ENCODE measurements at regions of chr5 and their contacts with region 1.

Region 1: GRCh38 chr5:180784497-180785097 is 18.0 kb downstream of the MGAT1 start:
- DNase-seq: peak; percentile 55 to 84 (median 77)
- ATAC-seq: peak; percentile 84
- H3K4me3 ChIP-seq: no peak overlapping the region
- H3K4me3 Mint-ChIP-seq: no peak overlapping the region
- H3K27ac ChIP-seq: no peak overlapping the region
- H3K27ac Mint-ChIP-seq: peak overlapping the region; percentile 1
- H3K4me1 ChIP-seq: no peaks in the 10 kb centered on the region
- H3K4me1 Mint-ChIP-seq: peaks cover 43% of the 10 kb centered on the region
- H3K27me3 ChIP-seq: no peaks in the 10 kb centered on the region
- H3K27me3 Mint-ChIP-seq: no peaks in the 10 kb centered on the region
- CTCF ChIP-seq: peak; percentile 74

Region 2: GRCh38 chr5:180607851-180608583 is 176.6 kb before region 1 on chr5:
- CTCF ChIA-PET with region 1: no interaction called
- POLR2A ChIA-PET with region 1: no interaction called
- intact Hi-C with region 1: no loop called
- DNase-seq: no peak
- ATAC-seq: no peak
- H3K4me3 ChIP-seq: no peak overlapping the region
- H3K4me3 Mint-ChIP-seq: no peak overlapping the region
- H3K27ac ChIP-seq: no peak overlapping the region
- H3K27ac Mint-ChIP-seq: no peak overlapping the region
- H3K4me1 ChIP-seq: no peaks in the 10 kb centered on the region
- H3K4me1 Mint-ChIP-seq: peaks cover 3% of the 10 kb centered on the region
- H3K27me3 ChIP-seq: no peaks in the 10 kb centered on the region
- H3K27me3 Mint-ChIP-seq: peaks cover 2% of the 10 kb centered on the region
- CTCF ChIP-seq: no peak

Region 3: GRCh38 chr5:180658774-180659564 is 125.6 kb before region 1 on chr5:
- CTCF ChIA-PET with region 1: no interaction called
- POLR2A ChIA-PET with region 1: no interaction called
- intact Hi-C with region 1: no loop called
- DNase-seq: no peak
- ATAC-seq: no peak
- H3K4me3 ChIP-seq: no peak overlapping the region
- H3K4me3 Mint-ChIP-seq: peak overlapping the region; percentile 11
- H3K27ac ChIP-seq: no peak overlapping the region
- H3K27ac Mint-ChIP-seq: no peak overlapping the region
- H3K4me1 ChIP-seq: no peaks in the 10 kb centered on the region
- H3K4me1 Mint-ChIP-seq: peaks cover 4% of the 10 kb centered on the region
- H3K27me3 ChIP-seq: peaks cover 2 to 3% of the 10 kb centered on the region in 2 experiments
- H3K27me3 Mint-ChIP-seq: peaks cover 29% of the 10 kb centered on the region
- CTCF ChIP-seq: no peak

Region 4: GRCh38 chr5:180802325-180803180 is 18.0 kb after region 1 on chr5 and contains the start of gene MGAT1:
- CTCF ChIA-PET with region 1: interaction called, 12 read pairs
- POLR2A ChIA-PET with region 1: interaction called, 5 read pairs
- intact Hi-C with region 1: loop called in 1 of 2 experiments (anchors 2 kb)
- DNase-seq: peak; percentile 39 to 87 (median 80)
- ATAC-seq: peak; percentile 60
- H3K4me3 ChIP-seq: peak within 1 kb of the TSS; percentile 90 to 92
- H3K4me3 Mint-ChIP-seq: peak within 1 kb of the TSS; percentile 87
- H3K27ac ChIP-seq: peak within 1 kb of the TSS; percentile 63 to 87
- H3K27ac Mint-ChIP-seq: peak within 1 kb of the TSS; percentile 100
- H3K4me1 ChIP-seq: peaks cover 80% of the 10 kb centered on the region
- H3K4me1 Mint-ChIP-seq: peaks cover 84% of the 10 kb centered on the region
- H3K27me3 ChIP-seq: no peaks in the 10 kb centered on the region
- H3K27me3 Mint-ChIP-seq: no peaks in the 10 kb centered on the region
- CTCF ChIP-seq: no peak
- total RNA-seq, gene MGAT1: 43.5 to 47.5 TPM

Region 5: GRCh38 chr5:180831139-180832048 is 46.8 kb after region 1 on chr5:
- CTCF ChIA-PET with region 1: interaction called, 3 read pairs
- POLR2A ChIA-PET with region 1: interaction called, 15 read pairs
- intact Hi-C with region 1: loop called in 1 of 2 experiments (anchors 10 kb)
- DNase-seq: peak; percentile 51 to 88 (median 79)
- ATAC-seq: peak; percentile 43
- H3K4me3 ChIP-seq: peak overlapping the region; percentile 67 to 93
- H3K4me3 Mint-ChIP-seq: peak overlapping the region; percentile 97
- H3K27ac ChIP-seq: peak overlapping the region; percentile 85 to 96
- H3K27ac Mint-ChIP-seq: peak overlapping the region; percentile 98
- H3K4me1 ChIP-seq: peaks cover 48% of the 10 kb centered on the region
- H3K4me1 Mint-ChIP-seq: peaks cover 51% of the 10 kb centered on the region
- H3K27me3 ChIP-seq: no peaks in the 10 kb centered on the region
- H3K27me3 Mint-ChIP-seq: no peaks in the 10 kb centered on the region
- CTCF ChIP-seq: no peak

Region 6: DNA sequence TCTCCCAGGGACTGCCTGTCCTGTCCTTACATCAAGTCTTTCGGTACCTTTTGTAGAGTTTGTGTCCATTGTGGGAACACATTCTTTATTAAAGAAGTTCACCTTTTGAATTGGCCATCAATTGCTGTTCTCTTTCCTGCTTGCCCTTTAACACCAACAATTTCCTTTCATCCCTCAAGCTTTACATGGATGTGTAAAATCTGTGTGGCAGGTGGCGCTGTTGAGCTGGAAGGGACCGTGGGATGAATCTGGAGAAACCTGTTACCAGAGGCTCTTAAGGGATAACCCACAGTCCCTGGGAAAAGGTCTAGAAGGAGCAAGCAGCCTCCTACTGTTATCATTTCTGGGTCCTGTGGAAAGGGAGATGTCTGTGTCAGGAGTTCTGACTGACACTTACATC is 84.4 kb after region 1 on chr5:
- CTCF ChIA-PET with region 1: interaction called, 5 read pairs
- POLR2A ChIA-PET with region 1: no interaction called
- intact Hi-C with region 1: loop called in 1 of 2 experiments (anchors 2 kb)
- DNase-seq: peak in 8 of 9 experiments; percentile 41 to 73 (median 64)
- ATAC-seq: no peak
- H3K4me3 ChIP-seq: no peak overlapping the region
- H3K4me3 Mint-ChIP-seq: no peak overlapping the region
- H3K27ac ChIP-seq: no peak overlapping the region
- H3K27ac Mint-ChIP-seq: no peak overlapping the region
- H3K4me1 ChIP-seq: no peaks in the 10 kb centered on the region
- H3K4me1 Mint-ChIP-seq: no peaks in the 10 kb centered on the region
- H3K27me3 ChIP-seq: no peaks in the 10 kb centered on the region
- H3K27me3 Mint-ChIP-seq: peaks cover 4% of the 10 kb centered on the region
- CTCF ChIP-seq: peak; percentile 53

Region 7: GRCh38 chr5:180920710-180921109 is 136.1 kb after region 1 on chr5:
- CTCF ChIA-PET with region 1: no interaction called
- POLR2A ChIA-PET with region 1: no interaction called
- intact Hi-C with region 1: no loop called
- DNase-seq: no peak
- ATAC-seq: no peak
- H3K4me3 ChIP-seq: no peak overlapping the region
- H3K4me3 Mint-ChIP-seq: no peak overlapping the region
- H3K27ac ChIP-seq: no peak overlapping the region
- H3K27ac Mint-ChIP-seq: no peak overlapping the region
- H3K4me1 ChIP-seq: no peaks in the 10 kb centered on the region
- H3K4me1 Mint-ChIP-seq: no peaks in the 10 kb centered on the region
- H3K27me3 ChIP-seq: peaks cover 0 to 2% of the 10 kb centered on the region in 2 experiments
- H3K27me3 Mint-ChIP-seq: peaks cover 21% of the 10 kb centered on the region
- CTCF ChIP-seq: no peak

Region 8: DNA sequence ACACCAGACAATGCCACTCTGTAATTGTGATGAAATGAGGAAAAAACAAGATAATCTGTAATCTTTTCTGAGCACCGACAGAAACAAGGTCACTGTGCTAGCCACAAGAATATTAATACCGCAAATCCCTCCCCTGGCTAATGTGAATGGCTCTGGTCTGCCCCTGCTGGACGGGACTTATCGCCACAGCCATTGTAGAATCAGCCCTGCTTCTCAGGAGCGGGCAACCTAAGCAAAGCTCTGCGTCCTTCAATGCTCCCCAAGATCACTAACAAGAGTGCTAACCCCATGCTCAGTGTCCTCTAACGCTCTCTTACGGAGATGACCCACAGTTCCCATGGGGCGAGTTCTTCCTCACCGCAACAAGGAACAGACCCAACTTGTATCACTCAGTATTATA is 303.7 kb after region 1 on chr5:
- CTCF ChIA-PET with region 1: no interaction called
- POLR2A ChIA-PET with region 1: no interaction called
- intact Hi-C with region 1: loop called in 1 of 2 experiments (anchors 10 kb)
- DNase-seq: no peak
- ATAC-seq: no peak
- H3K4me3 ChIP-seq: no peak overlapping the region
- H3K4me3 Mint-ChIP-seq: no peak overlapping the region
- H3K27ac ChIP-seq: no peak overlapping the region
- H3K27ac Mint-ChIP-seq: no peak overlapping the region
- H3K4me1 ChIP-seq: no peaks in the 10 kb centered on the region
- H3K4me1 Mint-ChIP-seq: no peaks in the 10 kb centered on the region
- H3K27me3 ChIP-seq: peaks cover 2 to 5% of the 10 kb centered on the region in 2 experiments
- H3K27me3 Mint-ChIP-seq: peaks cover 41% of the 10 kb centered on the region
- CTCF ChIP-seq: no peak

Region 9: DNA sequence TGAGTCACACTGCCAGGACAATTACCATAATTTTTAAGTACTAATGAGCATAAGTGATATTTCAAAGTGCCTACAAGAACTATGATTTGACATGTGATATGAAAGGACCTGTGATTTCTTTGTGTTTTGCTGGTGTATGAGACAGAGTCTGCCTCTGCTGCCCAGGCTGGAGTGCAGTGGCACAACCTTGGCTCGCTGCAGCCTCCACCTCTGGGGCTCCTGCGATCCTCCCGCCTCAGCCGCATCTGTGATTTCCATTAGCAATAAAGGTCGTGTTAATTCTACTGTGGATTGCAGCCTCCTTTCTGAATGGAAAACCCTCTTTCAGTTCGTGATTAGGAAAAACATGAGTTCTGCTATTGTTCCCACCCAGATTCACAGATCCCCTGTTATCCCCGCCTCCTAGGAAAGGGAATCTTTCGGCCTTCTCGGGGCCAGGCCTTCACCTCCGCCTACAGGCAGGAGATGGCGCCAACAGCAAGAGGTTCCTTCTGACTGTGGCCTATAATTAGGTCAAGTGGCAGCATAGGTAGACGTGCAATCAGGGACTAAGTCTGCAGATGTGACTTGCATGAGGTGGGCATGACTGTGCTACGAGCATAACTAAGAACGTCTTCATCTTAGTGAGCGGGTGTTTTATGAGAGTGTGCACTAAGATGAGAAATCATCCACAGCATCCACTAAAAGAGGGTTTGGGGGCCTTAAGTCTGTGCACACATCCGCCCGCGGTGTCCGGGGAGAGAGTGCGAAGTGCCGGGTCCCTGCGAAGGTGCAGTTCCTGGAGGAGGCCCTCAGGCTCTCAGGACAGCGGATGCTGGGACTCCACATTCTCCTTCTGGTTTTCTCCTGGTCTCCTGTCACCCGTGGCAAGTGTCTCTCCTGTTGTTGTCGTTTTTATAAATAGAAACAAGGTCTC is 397.3 kb after region 1 on chr5:
- CTCF ChIA-PET with region 1: interaction called, 3 read pairs
- POLR2A ChIA-PET with region 1: no interaction called
- intact Hi-C with region 1: loop called in 1 of 2 experiments (anchors 10 kb)
- DNase-seq: peak in 8 of 9 experiments; percentile 49 to 88 (median 73)
- ATAC-seq: peak; percentile 77
- H3K4me3 ChIP-seq: no peak overlapping the region
- H3K4me3 Mint-ChIP-seq: peak overlapping the region; percentile 83
- H3K27ac ChIP-seq: peak overlapping the region in 1 of 2 experiments; percentile 55
- H3K27ac Mint-ChIP-seq: peak overlapping the region; percentile 76
- H3K4me1 ChIP-seq: peaks cover 13% of the 10 kb centered on the region
- H3K4me1 Mint-ChIP-seq: peaks cover 31% of the 10 kb centered on the region
- H3K27me3 ChIP-seq: no peaks in the 10 kb centered on the region
- H3K27me3 Mint-ChIP-seq: peaks cover 2% of the 10 kb centered on the region
- CTCF ChIP-seq: peak; percentile 79